ENCODE measurements at regions of chr11 and their contacts with region 1.

Region 1: GRCh38 chr11:100681064-100681502 is 6.0 kb upstream of the ARHGAP42 start:
- DNase-seq: peak in 1 of 2 experiments; percentile 72
- ATAC-seq: peak; percentile 37 to 68; a peak in 3 of 6 replicates
- H3K4me3 ChIP-seq: no peak overlapping the region
- H3K27ac ChIP-seq: peak overlapping the region in 1 of 2 experiments; percentile 41; a peak in 1 of 6 replicates
- H3K4me1 ChIP-seq: peaks cover 42% of the 10 kb centered on the region
- CTCF ChIP-seq: no peak
- EP300 ChIP-seq: no peak
- POLR2A ChIP-seq: no peak
- RAD21 ChIP-seq: no peak

Region 2: DNA sequence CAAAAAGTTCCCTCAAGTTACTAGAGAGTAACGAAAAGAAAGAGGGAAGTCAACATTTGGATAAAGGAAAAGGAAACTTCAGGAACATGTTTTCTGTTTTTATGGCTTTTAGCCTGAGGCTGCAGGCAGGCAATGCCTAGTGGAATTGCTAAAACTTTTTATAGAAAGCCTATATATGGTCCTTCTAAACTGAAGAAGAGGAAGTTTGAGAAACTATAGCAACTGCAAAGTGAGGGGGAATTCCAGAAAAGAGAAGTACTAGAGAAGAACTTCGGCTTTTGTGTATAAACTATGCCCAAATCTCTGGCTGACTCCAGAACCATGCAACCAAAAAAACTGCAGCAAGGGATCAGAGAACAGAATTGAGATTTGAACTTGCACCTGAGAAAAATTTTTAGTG is 68.3 kb before region 1 on chr11:
- CTCF ChIA-PET with region 1: no interaction called
- POLR2A ChIA-PET with region 1: no interaction called
- DNase-seq: no peak
- ATAC-seq: no peak
- H3K4me3 ChIP-seq: no peak overlapping the region
- H3K27ac ChIP-seq: no peak overlapping the region
- H3K4me1 ChIP-seq: no peaks in the 10 kb centered on the region
- CTCF ChIP-seq: no peak
- EP300 ChIP-seq: no peak
- POLR2A ChIP-seq: no peak
- RAD21 ChIP-seq: no peak

Region 3: DNA sequence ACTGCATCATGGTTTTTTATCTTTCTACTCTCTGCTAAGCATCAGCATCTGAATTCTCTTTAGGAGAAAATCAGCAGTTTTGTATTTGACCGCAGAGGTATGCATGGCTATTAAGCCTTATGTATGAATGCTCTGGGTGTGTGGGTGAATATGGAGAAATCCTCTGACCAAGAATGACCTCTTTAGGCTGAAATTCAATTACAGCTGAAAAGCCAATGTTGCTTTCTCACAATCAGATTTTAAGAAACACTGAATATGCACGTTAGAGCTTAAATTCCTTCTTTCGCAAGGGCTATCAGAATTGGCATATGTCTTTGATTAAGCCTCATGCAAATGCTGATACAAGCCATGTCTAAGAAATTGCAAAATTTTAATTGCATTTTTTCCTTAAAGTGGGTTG is 49.2 kb after region 1 on chr11:
- CTCF ChIA-PET with region 1: no interaction called
- POLR2A ChIA-PET with region 1: no interaction called
- DNase-seq: no peak
- ATAC-seq: no peak
- H3K4me3 ChIP-seq: no peak overlapping the region
- H3K27ac ChIP-seq: no peak overlapping the region
- H3K4me1 ChIP-seq: peaks cover 8% of the 10 kb centered on the region
- CTCF ChIP-seq: no peak
- EP300 ChIP-seq: no peak
- POLR2A ChIP-seq: no peak
- RAD21 ChIP-seq: no peak

Region 4: DNA sequence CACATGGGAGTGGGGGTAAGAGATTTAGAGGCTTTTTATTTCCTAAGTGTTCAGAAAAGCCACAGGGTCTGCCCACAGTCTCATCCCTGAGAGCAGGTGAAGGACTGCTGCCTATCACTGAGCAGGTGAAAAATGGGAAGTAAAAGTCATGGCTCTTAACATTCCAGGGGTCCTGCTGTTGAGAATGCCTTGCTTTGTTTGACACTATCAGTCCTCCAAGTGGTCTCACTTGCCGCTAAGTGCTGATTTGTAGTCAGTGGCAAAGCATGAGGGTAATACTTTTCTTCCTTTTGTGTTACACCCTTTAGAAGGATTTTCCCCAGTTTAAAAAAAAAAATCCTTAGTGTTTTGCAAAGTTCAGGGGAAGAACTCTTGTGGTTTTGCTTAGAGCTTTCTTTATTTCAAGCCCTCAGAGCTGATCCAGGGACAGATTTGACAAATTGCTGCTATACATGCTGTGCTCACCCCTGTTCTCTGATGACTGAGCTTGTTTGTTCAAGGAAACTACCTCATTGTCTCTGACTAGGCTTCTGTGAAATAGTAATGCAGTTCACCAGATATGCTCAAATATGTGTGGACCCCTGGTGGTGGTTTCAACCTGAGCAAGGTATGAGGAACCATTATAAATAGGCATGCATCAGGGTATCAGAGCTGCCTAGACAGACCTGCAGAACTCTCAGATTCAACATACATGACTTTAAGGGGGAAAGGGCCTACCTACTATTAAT is 147.0 kb after region 1 on chr11:
- CTCF ChIA-PET with region 1: interaction called, 19 read pairs
- POLR2A ChIA-PET with region 1: no interaction called
- DNase-seq: peak; percentile 18 to 76
- ATAC-seq: peak; percentile 90
- H3K4me3 ChIP-seq: no peak overlapping the region
- H3K27ac ChIP-seq: peak overlapping the region; percentile 55 to 59
- H3K4me1 ChIP-seq: peaks cover 46% of the 10 kb centered on the region
- CTCF ChIP-seq: 0 out of 3 replicates have a peak, but pooled peaks have one; percentile 24
- EP300 ChIP-seq: no peak
- POLR2A ChIP-seq: no peak
- RAD21 ChIP-seq: peak; percentile 27 to 30; a peak in 3 of 5 replicates

Region 5: GRCh38 chr11:100847696-100848216 is 166.7 kb after region 1 on chr11:
- CTCF ChIA-PET with region 1: interaction called, 20 read pairs
- POLR2A ChIA-PET with region 1: no interaction called
- DNase-seq: no peak
- ATAC-seq: no peak
- H3K4me3 ChIP-seq: no peak overlapping the region
- H3K27ac ChIP-seq: no peak overlapping the region
- H3K4me1 ChIP-seq: peaks cover 32% of the 10 kb centered on the region
- CTCF ChIP-seq: no peak
- EP300 ChIP-seq: no peak
- POLR2A ChIP-seq: no peak
- RAD21 ChIP-seq: no peak

Region 6: DNA sequence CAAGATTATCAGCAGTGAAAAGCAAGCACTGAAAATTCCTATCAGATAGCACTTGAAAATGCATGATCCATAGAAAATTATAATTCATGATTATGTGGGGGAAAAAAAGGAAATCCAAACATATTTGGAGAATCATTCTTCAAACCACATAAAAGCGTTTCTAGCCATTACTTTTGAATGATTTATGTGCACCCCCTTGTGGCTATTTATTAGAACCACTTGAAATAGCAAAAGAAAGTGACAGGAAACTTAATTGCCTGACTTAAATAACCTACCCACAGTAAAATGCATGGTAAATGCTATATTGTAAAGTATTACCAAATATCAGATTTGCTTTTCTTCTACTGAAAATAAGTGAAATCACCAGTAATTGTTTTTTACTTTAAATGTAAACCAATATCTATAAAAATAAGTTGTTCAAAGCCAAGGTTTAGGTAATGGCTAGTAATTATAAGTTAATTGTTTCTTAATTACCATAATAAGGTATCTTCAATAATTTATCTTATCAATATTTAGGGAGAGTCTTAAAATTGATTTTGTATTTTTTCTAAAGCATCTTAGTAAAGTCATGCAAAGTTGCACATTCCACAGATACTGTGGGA is 174.5 kb after region 1 on chr11:
- CTCF ChIA-PET with region 1: interaction called, 20 read pairs
- POLR2A ChIA-PET with region 1: no interaction called
- DNase-seq: peak; percentile 7 to 57
- ATAC-seq: peak; percentile 34 to 44; a peak in 1 of 6 replicates
- H3K4me3 ChIP-seq: no peak overlapping the region
- H3K27ac ChIP-seq: no peak overlapping the region
- H3K4me1 ChIP-seq: peaks cover 26% of the 10 kb centered on the region; the same call in 2 of the 3 replicates
- CTCF ChIP-seq: peak; percentile 67
- EP300 ChIP-seq: no peak
- POLR2A ChIP-seq: no peak
- RAD21 ChIP-seq: peak; percentile 77 to 83